PC-9 (cell line): ENCODE measurements at regions of chr19 and their contacts with region 1.

Region 1: DNA sequence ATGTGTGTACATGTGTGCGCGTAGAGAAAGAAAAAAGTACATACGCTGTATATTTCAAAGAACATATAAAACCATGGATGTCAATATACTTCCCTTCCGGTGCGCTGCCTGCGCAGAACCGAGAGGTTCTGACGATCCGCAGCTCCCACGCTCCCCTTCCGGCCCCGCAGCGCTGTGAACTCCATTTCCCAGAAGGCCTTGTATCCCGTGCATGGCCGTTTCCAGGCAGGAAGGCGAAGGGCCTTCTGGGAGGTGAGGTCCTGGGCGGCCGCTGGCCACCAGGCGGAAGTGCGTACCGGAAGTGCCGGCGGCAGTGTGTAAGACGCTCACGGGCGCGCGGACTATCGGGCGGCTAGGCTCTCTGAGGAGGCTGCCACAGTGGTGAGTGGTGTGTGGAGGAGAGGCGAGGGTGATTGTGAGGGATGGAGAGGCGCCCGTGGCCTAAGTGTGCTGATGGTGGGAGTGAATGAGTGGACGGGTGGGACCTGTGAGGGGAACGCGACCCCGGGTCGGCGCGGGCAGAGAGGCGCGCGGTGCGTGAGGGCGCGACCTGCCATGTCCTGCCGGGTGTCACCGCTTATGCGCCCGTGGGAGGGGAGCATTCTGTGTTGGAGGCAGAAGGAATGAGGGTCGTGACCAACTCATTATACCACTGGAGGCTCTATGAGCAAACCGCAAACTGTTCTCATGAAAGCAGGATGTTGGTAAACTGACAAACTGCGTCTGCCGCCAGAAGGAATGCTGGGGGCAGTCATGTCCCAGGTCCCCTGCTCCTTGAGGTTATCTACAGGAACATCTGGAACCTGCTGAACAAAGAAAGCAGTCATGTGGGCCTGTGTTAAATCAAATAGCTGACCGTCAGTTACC is at the start of gene ERVK3-1:
- DNase-seq: peak; percentile 87 to 91
- H3K4me3 ChIP-seq: peak within 1 kb of the TSS; percentile 94
- H3K27ac ChIP-seq: no peak within 1 kb of the TSS
- H3K4me1 ChIP-seq: peaks cover 6% of the 10 kb centered on the region
- H3K27me3 ChIP-seq: no peaks in the 10 kb centered on the region
- CTCF ChIP-seq: no peak
- total RNA-seq, gene ERVK3-1: 19.4 and 21.3 TPM in 2 replicates

Region 2: DNA sequence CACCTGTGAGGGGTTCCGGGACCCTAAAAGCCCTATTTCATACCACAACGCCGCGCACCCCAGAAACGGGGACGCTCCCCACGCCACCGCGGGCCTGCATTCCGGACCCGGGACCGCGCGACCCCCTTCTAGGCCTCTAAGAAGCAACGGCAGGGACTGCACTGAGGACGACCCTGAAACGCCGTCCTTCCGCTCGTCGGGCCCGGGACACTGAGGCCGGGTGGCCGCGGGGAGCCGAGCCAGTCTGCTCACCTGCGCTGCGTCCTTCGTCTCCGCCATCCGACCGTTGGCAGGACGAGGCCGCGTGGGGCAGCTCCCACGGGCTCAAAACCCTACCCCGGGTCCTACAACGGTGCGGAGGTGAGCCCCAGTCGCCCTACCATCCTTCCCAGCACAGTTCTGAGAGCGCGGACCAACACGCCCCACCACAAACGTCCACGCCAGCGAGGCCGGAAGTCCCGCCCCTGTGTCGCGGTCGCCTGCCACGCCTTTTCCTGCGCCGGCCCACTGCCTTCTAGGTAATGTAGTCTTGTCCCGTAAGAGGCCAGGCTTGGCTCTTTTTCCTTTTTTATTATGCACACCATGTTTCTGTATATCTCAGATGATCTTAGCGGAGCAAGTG is 745.8 kb before region 1 on chr19 and contains the start of gene ZNF550:
- CTCF ChIA-PET with region 1: no interaction called
- POLR2A ChIA-PET with region 1: no interaction called
- intact Hi-C with region 1: loop called (anchors 1 kb)
- DNase-seq: peak; percentile 83 to 93
- H3K4me3 ChIP-seq: peak within 1 kb of the TSS; percentile 90
- H3K27ac ChIP-seq: peak within 1 kb of the TSS; percentile 83
- H3K4me1 ChIP-seq: peaks cover 13% of the 10 kb centered on the region
- H3K27me3 ChIP-seq: no peaks in the 10 kb centered on the region; the same call in 1 of the 2 replicates
- CTCF ChIP-seq: no peak
- total RNA-seq, gene ZNF550: 18.2 and 19.8 TPM in 2 replicates

Region 3: GRCh38 chr19:57850553-57851017 is 454.7 kb before region 1 on chr19:
- CTCF ChIA-PET with region 1: no interaction called
- POLR2A ChIA-PET with region 1: no interaction called
- intact Hi-C with region 1: no loop called
- DNase-seq: peak; percentile 25 to 84
- H3K4me3 ChIP-seq: peak overlapping the region; percentile 78
- H3K27ac ChIP-seq: peak overlapping the region; percentile 55
- H3K4me1 ChIP-seq: peaks cover 9% of the 10 kb centered on the region; the same call in 1 of the 2 replicates
- H3K27me3 ChIP-seq: no peaks in the 10 kb centered on the region
- CTCF ChIP-seq: no peak

Region 4: GRCh38 chr19:58117841-58118575 is 187.3 kb before region 1 on chr19:
- CTCF ChIA-PET with region 1: no interaction called
- POLR2A ChIA-PET with region 1: no interaction called
- intact Hi-C with region 1: no loop called
- DNase-seq: no peak
- H3K4me3 ChIP-seq: no peak overlapping the region
- H3K27ac ChIP-seq: no peak overlapping the region
- H3K4me1 ChIP-seq: no peaks in the 10 kb centered on the region
- H3K27me3 ChIP-seq: no peaks in the 10 kb centered on the region
- CTCF ChIP-seq: no peak

Region 5: DNA sequence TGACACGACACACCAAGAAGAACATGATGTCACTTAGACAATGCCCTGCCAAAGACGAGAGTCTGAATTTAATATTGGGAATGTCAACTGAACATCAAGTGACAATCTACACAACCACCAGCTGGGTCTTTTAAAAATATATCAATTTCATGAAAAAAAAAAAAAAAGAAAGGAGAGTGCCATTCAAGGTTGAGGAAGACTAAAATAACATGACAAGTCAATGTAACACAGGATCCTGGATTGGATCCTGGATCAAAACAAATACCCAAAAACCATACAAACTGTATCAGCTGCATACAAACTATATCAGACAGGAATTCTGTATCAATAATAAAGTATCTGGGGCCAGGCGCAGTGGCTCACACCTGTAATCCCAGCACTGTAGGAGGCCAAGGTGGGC is 159.4 kb before region 1 on chr19:
- CTCF ChIA-PET with region 1: no interaction called
- POLR2A ChIA-PET with region 1: interaction called, 40 read pairs
- intact Hi-C with region 1: no loop called
- DNase-seq: no peak
- H3K4me3 ChIP-seq: no peak overlapping the region
- H3K27ac ChIP-seq: no peak overlapping the region
- H3K4me1 ChIP-seq: no peaks in the 10 kb centered on the region
- H3K27me3 ChIP-seq: no peaks in the 10 kb centered on the region
- CTCF ChIP-seq: no peak

Region 6: DNA sequence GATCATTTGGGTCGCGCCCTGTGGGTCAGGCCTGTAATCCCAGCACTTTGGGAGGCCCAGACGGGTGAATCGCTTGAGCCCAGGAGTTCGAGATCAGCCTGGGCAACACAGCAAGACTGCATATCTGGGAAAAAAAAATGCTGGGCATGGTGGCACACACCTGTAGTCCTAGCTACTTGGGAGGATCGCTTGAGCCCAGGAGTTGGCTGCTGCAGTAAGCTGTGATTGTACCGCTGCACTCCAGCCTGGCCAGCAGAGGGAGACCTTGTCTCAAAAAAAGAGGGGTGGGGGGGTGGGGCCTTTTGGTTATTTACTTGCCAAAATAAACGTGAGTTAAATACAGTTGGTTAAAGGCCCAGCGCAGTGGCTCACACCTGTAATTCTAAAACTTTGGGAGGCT is 86.4 kb before region 1 on chr19:
- CTCF ChIA-PET with region 1: no interaction called
- POLR2A ChIA-PET with region 1: interaction called, 20 read pairs
- intact Hi-C with region 1: no loop called
- DNase-seq: peak in 1 of 2 experiments; percentile 29
- H3K4me3 ChIP-seq: no peak overlapping the region
- H3K27ac ChIP-seq: no peak overlapping the region
- H3K4me1 ChIP-seq: no peaks in the 10 kb centered on the region
- H3K27me3 ChIP-seq: no peaks in the 10 kb centered on the region
- CTCF ChIP-seq: peak; percentile 59

Region 7: GRCh38 chr19:58228585-58229254 is 76.6 kb before region 1 on chr19 and contains the start of gene ZNF544:
- CTCF ChIA-PET with region 1: no interaction called
- POLR2A ChIA-PET with region 1: interaction called, 10 read pairs
- intact Hi-C with region 1: no loop called
- DNase-seq: peak; percentile 57 to 71
- H3K4me3 ChIP-seq: peak within 1 kb of the TSS; percentile 75
- H3K27ac ChIP-seq: peak within 1 kb of the TSS; percentile 34; the same call in 1 of the 2 replicates
- H3K4me1 ChIP-seq: no peaks in the 10 kb centered on the region
- H3K27me3 ChIP-seq: no peaks in the 10 kb centered on the region
- CTCF ChIP-seq: no peak
- total RNA-seq, gene ZNF544: 29.5 and 32.7 TPM in 2 replicates

Region 8: DNA sequence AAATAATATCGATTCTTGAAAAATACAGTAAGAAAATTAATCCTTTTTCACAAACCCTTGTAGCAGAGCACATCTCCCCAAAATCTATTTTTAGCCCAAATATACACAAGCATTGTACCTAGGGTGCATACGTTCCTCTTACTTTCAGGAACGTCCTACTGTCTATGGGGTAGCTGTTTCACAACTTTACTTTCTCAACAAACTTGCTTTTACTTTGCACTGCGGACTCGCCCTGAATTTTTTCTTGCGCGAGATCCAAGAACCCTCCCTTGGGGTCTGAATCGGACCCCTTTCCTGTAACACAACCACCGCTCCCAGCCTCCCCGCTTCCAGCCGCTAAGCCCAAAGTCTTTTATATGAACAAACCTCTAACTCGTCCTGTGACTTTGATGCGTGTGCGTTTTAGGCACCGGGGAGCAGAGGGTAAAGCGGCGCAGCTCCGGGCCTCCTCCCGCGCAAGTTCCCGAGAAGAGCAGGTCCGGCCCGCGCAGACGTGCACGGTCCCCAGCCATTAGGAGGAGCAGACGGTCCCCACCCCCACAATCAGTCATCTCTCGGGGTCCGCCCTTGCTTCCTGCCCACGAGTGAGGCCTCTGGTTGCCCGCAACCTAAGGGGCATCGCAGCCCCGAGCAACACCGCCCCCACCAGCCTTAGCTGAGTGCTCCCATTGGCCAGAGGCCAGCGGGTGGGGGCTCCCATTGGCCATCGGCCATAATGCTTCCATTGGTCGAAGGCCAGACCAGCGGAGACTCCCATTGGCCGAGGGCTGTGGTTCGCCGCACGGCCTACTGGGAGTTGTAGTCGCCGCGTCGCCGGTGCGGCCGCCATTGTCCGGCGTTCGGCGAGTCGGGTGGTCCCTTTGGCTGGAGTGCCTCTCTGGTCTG is 26.9 kb before region 1 on chr19 and contains the start of gene ZNF8:
- CTCF ChIA-PET with region 1: no interaction called
- POLR2A ChIA-PET with region 1: interaction called, 3 read pairs
- intact Hi-C with region 1: loop called (anchors 1 kb)
- DNase-seq: peak; percentile 92 to 97
- H3K4me3 ChIP-seq: peak within 1 kb of the TSS; percentile 79
- H3K27ac ChIP-seq: 0 out of 2 replicates have a peak within 1 kb of the TSS, but pooled peaks have one; percentile 17
- H3K4me1 ChIP-seq: peaks cover 6% of the 10 kb centered on the region; the same call in 1 of the 2 replicates
- H3K27me3 ChIP-seq: no peaks in the 10 kb centered on the region
- CTCF ChIP-seq: no peak
- total RNA-seq, gene ZNF8: 6.2 and 6.4 TPM in 2 replicates

Region 9: DNA sequence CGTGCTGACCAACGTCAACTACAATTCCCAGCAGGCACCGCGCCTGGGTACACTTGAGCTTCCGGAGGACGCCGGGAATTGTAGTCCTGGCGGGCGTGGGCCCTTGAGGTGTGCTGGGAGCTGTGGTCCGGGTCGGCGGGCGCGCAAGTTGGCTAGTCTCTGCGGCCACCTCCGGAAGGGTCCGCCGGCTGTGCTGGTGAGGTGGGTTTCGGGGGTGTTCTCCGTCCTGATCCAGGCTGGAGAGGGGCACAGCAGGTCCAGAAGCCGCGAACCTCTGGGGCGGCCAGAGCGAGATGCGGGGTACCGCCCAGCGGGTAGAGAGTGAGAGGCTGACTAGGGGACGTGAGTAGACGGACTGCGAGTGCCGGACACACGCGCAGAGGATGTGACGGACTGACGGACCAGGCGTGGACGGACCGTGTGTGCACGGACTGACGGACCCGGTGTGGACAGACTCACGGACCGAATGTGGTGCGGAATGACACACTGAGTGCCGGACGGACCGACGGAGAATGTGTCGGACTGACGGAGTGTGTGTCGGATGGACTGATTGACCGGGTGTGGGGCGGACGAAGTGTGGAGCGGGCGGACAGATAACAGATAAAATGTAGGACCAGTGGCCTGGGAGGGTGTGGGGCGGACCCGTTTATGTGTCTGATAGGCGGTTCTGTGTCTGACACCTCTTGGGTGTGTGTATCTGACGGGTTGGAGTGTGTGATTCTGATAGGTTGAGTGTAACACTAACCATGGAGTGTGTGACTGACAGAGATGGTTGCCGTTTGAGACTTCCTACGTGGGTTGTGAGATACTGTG is 21.8 kb after region 1 on chr19 and contains the start of gene ZSCAN22:
- CTCF ChIA-PET with region 1: no interaction called
- POLR2A ChIA-PET with region 1: interaction called, 3 read pairs
- intact Hi-C with region 1: loop called (anchors 2 kb)
- DNase-seq: peak; percentile 86 to 90
- H3K4me3 ChIP-seq: peak within 1 kb of the TSS; percentile 80
- H3K27ac ChIP-seq: peak within 1 kb of the TSS; percentile 50
- H3K4me1 ChIP-seq: no peaks in the 10 kb centered on the region; the same call in 1 of the 2 replicates
- H3K27me3 ChIP-seq: no peaks in the 10 kb centered on the region
- CTCF ChIP-seq: no peak
- total RNA-seq, gene ZSCAN22: 0.08 TPM in 1 of 2 replicates, not detected in the other